ENCODE measurements at regions of chr1 and their contacts with region 1.

Region 1: DNA sequence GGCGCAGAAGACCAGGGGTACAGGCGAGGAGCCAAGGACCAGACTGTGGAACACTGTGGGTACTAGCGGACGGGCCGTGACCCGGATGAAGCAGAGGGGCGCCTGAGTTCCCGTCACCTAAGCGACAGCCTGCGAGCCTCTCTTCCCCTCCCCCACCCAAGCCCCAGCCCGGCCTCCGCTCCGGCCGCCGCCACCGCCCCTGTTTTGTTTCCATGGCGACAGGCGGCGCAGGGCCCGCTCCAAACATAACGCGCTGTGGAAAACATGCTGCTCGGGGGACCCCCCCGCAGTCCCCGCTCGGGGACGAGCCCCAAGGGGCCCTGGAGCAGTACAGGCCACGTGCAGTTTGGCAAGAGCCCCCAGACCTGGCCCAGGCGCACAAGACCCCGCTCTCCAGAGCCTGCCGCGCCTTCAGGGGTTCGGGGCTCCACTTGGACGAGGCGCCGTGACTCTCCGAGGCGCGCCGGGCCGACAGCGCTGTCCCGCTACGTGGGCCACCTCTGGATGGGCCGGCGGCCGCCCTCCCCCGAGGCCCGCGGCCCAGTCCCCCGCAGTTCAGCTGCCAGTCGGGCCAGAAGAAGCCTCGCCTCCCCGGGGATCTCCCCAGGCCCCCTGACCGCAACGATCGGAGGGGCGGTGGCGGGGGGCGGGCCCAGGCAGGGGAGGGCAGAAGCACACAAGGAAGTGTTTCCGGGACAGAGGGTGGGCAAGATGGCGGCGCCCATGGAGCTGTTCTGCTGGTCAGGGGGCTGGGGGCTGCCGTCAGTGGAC is at the start of gene MTX1:
- DNase-seq: peak; percentile 91
- ATAC-seq: peak; percentile 75
- H3K4me3 Mint-ChIP-seq: peak within 1 kb of the TSS; percentile 90
- H3K27ac Mint-ChIP-seq: peak within 1 kb of the TSS; percentile 92
- H3K4me1 Mint-ChIP-seq: peaks cover 30% of the 10 kb centered on the region
- H3K27me3 Mint-ChIP-seq: no peaks in the 10 kb centered on the region
- total RNA-seq, gene MTX1: 43.0 to 46.3 TPM

Region 2: DNA sequence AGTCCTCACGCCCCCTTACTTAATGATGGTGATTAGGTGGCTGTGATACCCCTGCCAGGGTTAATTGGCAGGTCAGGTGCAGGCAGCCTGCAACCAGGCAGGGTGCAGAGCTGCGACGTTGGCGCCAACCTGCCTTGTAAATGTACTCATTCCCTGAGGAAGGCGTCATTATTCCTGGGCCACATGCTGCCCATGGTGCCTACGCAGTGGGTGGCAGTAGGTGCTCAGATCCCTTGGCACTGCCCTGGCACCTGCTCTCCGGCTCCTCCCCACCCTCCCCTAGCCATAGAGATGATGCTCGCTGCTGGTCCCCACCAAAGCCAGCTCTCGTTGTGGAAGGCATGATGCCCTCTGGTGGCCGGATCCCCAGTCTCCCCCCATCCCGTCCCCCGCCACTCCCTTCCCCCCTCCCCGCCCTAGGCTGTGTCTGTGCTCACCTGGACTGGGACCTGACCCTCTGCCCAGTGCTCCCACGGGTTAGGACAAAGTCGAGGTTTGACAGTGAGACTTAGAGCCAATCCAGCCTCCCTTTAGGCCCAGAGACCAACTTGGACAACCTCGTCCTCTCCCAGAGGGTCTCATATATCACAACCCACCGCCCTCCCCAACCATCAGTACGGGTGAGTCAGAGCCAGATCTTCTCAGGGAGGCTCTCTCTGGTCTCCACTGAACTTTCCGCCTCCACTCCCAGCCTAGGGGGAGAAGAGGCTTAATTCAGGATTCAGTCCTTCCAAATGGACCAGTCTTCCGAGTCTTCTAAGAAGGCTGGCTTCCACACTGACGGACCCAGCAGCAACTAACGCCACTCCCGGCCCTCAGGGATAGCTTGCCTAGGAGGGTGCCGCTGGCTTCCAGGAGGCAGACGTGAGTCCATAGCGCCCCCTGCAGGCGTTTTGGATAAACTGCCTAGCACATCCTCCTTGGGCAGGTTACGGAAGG is 41.3 kb before region 1 on chr1:
- CTCF ChIA-PET with region 1: interaction called, 18 read pairs
- POLR2A ChIA-PET with region 1: no interaction called
- DNase-seq: peak; percentile 92
- ATAC-seq: peak; percentile 80
- H3K4me3 Mint-ChIP-seq: peak overlapping the region; percentile 53
- H3K27ac Mint-ChIP-seq: no peak overlapping the region
- H3K4me1 Mint-ChIP-seq: peaks cover 25% of the 10 kb centered on the region
- H3K27me3 Mint-ChIP-seq: no peaks in the 10 kb centered on the region

Region 3: DNA sequence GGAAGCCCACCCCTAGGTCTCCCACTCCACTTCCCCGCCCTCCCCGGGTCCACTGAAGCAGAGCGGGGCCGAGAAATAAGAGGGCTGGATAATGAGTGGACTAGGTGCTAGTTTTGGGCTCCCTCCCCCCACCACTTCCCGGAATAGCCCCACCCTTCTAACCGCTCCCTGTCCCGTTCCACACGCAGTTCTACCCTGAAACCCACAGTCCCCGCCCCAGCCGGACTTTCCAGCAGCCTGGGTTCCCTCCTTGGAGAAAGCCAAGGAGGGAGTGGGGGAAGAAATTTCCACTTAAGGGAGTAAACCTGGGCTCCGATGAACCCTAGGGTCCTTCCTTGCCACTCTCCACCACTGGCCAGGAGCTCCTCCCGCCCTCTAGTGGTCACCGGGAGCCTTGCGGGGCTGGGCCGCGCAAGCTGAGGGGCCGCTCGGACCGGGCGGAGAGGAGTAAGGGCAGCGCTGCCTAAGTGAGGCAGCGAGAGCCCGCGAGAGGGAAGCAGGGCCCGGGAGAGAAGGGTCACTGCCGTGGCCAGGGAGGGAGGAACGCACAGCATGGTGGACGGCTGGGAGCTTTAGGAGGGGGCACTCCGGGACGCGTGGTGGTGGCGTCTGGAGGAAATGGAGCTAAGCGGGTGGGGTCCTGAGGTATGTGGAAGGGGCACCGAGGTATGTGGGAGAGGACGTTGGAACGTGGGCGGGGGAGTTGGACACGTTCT is 15.3 kb before region 1 on chr1:
- CTCF ChIA-PET with region 1: interaction called, 55 read pairs
- POLR2A ChIA-PET with region 1: interaction called, 26 read pairs
- DNase-seq: peak; percentile 82
- ATAC-seq: peak; percentile 49
- H3K4me3 Mint-ChIP-seq: peak overlapping the region; percentile 84
- H3K27ac Mint-ChIP-seq: peak overlapping the region; percentile 98
- H3K4me1 Mint-ChIP-seq: peaks cover 40% of the 10 kb centered on the region
- H3K27me3 Mint-ChIP-seq: no peaks in the 10 kb centered on the region

Region 4: DNA sequence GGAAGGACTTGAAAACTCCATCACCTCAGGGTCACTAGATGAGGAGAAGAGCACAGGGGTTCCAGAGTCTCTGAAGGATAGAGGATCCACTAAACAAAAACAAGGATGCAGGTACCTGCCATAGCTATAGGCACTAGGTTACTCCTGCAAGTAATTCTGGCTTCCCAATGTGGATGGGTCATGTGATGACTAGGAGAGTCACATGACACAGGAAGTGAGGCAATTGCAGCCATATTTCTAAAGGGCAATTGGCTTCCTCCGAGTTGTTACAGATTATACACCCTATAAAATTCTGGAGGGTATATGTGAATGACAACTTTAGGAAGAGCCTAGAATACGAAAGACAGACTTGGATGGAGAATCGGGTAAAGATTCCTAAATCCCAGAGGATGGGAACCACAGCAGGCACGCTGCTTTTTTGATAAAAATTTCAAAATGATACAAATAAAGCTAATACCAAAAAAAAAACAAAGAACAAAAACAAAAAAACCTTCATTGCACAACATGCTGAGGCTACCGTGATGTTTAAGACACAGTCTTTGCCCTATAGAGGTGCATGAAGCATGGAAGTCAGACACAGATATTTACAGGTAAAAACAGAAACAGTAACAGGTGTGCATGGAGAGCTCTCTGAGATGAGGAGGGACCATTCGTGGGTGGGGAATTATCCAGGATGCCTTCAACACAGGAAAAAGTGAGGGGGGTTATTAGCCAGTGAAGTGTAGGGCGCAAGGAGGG is 10.3 kb after region 1 on chr1:
- CTCF ChIA-PET with region 1: interaction called, 134 read pairs
- POLR2A ChIA-PET with region 1: interaction called, 6 read pairs
- DNase-seq: peak; percentile 53
- ATAC-seq: peak; percentile 8
- H3K4me3 Mint-ChIP-seq: no peak overlapping the region
- H3K27ac Mint-ChIP-seq: peak overlapping the region; percentile 89
- H3K4me1 Mint-ChIP-seq: peaks cover 35% of the 10 kb centered on the region
- H3K27me3 Mint-ChIP-seq: no peaks in the 10 kb centered on the region

Region 5: DNA sequence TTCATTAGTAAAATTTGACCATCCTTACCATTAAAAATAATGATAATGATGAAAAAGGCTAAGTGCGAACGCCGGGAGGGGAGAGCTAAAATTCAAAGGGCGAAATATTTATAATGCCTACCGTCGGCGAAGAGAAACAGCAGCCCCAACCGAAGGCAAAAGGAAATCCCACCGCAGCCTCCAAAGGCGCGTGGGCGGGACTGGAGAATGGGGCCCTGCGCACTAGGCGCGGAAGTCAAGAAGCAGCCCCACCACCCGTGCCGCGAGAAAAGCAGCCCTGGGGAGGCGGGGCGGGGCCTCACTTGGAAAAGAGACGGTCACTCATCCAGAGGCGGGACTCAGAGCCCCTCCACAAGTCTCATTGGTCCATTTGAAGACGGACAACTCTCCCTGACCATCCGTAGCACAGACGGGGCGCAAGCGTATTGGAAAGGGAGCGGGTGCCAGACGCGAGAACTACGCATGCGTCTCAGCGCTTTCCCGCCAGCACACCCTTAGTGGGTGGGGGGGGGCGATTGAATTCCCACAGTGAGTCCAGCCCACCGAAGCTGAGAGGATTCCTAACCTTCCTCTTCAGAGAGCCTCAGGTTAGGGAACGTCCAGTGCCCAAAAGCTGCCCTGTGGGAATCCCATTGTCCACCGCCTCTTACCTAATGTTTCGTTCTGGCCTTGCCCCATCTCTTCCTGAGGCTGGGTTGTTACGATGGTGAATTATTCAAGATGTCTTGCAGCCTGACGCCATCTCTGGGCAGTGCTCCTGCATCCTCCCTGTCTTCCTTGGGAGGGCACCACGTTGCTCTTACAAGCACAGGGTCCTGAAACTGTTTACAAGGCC is 18.8 kb after region 1 on chr1:
- CTCF ChIA-PET with region 1: interaction called, 134 read pairs
- POLR2A ChIA-PET with region 1: interaction called, 39 read pairs
- DNase-seq: peak; percentile 99
- ATAC-seq: peak; percentile 96
- H3K4me3 Mint-ChIP-seq: peak overlapping the region; percentile 91
- H3K27ac Mint-ChIP-seq: peak overlapping the region; percentile 94
- H3K4me1 Mint-ChIP-seq: peaks cover 33% of the 10 kb centered on the region
- H3K27me3 Mint-ChIP-seq: no peaks in the 10 kb centered on the region

Region 6: DNA sequence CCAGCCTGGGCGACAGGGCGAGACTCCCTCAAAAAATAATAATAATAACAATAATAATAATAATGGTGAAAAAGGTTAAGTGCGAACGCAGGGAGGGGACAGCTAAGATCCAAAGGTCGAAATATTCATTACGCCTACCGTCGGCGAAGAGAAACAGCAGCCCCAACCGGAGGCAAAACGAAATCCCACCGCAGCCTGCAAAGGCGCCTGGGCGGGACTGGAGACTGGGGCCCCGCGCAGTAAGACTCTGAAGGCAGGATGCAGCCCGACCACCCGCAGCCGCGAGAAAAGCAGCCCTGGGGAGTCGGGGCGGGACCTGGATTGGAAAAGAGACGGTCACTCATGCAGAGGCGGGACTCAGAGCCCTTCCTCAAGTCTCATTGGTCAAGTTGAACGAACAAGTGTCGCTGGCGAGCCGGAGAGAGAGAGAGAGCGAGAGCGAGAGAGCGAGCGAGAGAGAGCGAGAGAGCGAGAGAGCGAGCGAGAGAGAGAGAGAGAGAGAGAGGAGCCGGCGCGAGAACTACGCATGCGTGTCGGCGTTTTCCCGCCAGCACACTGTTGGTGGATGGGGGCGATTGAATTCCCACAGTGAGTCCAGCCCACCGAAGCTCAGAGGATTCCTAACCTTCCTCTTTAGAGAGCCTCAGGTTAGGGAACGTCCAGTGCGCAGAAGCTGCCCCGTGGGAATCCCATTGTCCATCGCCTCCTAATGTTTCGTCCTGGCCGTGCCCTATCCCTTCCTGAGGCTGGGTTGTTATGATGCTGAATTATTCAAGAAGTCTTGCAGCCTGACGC is 35.8 kb after region 1 on chr1:
- CTCF ChIA-PET with region 1: interaction called, 26 read pairs
- POLR2A ChIA-PET with region 1: interaction called, 21 read pairs
- DNase-seq: peak; percentile 100
- ATAC-seq: peak; percentile 97
- H3K4me3 Mint-ChIP-seq: peak overlapping the region; percentile 69
- H3K27ac Mint-ChIP-seq: peak overlapping the region; percentile 90
- H3K4me1 Mint-ChIP-seq: peaks cover 52% of the 10 kb centered on the region
- H3K27me3 Mint-ChIP-seq: peaks cover 2% of the 10 kb centered on the region

Region 7: GRCh38 chr1:155295183-155295941 is 86.6 kb after region 1 on chr1:
- CTCF ChIA-PET with region 1: no interaction called
- POLR2A ChIA-PET with region 1: no interaction called
- DNase-seq: no peak
- ATAC-seq: peak; percentile 57
- H3K4me3 Mint-ChIP-seq: no peak overlapping the region
- H3K27ac Mint-ChIP-seq: no peak overlapping the region
- H3K4me1 Mint-ChIP-seq: peaks cover 7% of the 10 kb centered on the region
- H3K27me3 Mint-ChIP-seq: peaks cover 38% of the 10 kb centered on the region

Region 8: DNA sequence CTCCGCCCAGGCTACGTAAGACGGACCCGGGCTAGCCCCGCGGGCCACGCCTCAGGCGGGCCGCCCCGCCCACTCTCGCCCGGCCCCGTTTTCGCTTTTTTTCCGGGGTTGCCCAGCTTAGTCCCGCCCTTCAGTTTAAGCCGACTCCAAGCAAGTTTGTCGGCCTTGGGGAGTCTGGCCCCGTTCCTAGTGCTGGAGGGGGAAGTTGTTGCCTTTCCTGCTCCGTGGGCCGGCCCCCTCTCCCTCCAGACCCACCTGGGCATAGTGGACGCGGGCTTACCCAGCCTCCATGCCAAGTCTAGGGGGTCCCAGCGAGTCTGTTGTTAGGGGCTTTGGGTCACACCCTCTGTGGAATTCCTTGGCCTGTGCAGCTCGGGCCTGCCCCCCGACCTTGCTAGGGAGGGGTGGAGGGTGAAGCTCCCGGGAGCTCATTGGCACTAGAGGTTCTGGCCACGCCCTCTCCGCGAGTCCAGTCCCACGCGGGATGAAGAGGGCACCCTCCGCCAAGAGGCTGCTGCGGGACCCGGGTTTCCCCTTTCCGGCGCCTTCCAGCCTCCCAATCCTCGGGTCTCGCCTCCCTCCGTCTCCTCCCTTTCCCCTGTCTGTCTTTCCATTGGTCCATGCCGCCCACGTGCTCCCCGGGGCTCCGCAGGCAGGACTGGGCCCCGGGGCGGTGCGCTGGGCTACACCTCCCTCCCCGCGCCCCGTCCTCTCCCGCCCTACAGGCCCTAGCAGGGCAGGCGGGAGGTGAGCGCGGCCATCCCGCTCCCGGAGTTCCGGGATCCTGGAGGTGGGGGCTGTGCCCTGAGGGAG is 115.3 kb after region 1 on chr1:
- CTCF ChIA-PET with region 1: interaction called, 11 read pairs
- POLR2A ChIA-PET with region 1: no interaction called
- DNase-seq: peak; percentile 93
- ATAC-seq: peak; percentile 86
- H3K4me3 Mint-ChIP-seq: peak overlapping the region; percentile 83
- H3K27ac Mint-ChIP-seq: peak overlapping the region; percentile 77
- H3K4me1 Mint-ChIP-seq: peaks cover 47% of the 10 kb centered on the region
- H3K27me3 Mint-ChIP-seq: no peaks in the 10 kb centered on the region

Measured in activated CD8-positive, alpha-beta T cell treated with anti-CD3 and anti-CD28 coated beads, Interleukin-2, amount 10 ng/mL, durations not matched to agents 7 days and 5 days (primary cell).